ENCODE measurements at regions of chr6 and their contacts with region 1.

Region 1: GRCh38 chr6:26596579-26597388 is at the start of gene ABT1:
- DNase-seq: peak; percentile 99
- H3K4me3 ChIP-seq: peak within 1 kb of the TSS; percentile 30 to 87 (median 69)
- H3K27ac ChIP-seq: peak within 1 kb of the TSS; percentile 80
- H3K4me1 ChIP-seq: peaks cover 18% of the 10 kb centered on the region
- H3K27me3 ChIP-seq: peaks cover 8 to 11% of the 10 kb centered on the region in 2 experiments
- CTCF ChIP-seq: no peak
- POLR2A ChIP-seq: peak; percentile 80
- total RNA-seq, gene ABT1: 18.5 and 20.1 TPM in 2 replicates

Region 2: DNA sequence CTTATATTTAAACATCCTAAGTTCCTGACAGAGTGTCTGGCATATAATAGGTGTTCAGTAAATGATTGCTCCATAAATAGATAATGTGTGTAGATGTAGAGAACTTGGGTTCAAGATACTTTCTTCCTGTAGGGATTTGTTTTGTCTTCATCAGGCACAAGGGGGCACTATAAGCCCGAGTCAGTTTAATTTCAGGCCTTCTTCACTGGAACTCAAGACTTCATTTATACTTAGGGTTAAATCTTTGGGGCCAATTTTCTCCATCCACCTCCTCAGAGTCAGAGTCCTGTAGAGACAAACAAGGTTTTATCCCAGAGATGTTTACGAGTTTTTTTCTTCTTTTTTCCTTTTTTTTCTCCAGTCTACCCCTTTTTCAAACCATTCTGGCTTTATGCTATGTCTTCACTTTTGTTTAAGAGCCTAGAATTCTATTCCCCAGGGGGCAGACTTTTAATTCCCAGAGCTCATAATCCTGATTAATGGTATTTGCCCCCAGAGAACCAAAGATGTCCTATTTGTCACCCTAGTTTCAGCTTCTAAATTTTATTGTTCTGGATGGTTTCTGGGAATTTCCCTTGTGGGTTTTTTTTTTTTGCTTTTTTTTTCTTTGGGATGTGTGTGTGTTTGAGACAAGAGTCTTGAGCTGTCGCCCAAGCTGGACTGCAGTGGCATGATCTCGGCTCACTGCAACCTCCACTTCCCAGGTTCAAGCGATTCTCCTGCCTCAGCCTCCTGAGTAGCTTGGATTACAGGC is 421.2 kb before region 1 on chr6:
- CTCF ChIA-PET with region 1: interaction called, 16 read pairs
- POLR2A ChIA-PET with region 1: no interaction called
- dilution Hi-C with region 1: no loop called
- intact Hi-C with region 1: loop called (anchors 2 kb)
- DNase-seq: peak; percentile 85
- H3K4me3 ChIP-seq: no peak overlapping the region
- H3K27ac ChIP-seq: no peak overlapping the region
- H3K4me1 ChIP-seq: peaks cover 11% of the 10 kb centered on the region
- H3K27me3 ChIP-seq: no peaks in the 10 kb centered on the region
- CTCF ChIP-seq: peak; percentile 46 to 51
- POLR2A ChIP-seq: no peak

Region 3: DNA sequence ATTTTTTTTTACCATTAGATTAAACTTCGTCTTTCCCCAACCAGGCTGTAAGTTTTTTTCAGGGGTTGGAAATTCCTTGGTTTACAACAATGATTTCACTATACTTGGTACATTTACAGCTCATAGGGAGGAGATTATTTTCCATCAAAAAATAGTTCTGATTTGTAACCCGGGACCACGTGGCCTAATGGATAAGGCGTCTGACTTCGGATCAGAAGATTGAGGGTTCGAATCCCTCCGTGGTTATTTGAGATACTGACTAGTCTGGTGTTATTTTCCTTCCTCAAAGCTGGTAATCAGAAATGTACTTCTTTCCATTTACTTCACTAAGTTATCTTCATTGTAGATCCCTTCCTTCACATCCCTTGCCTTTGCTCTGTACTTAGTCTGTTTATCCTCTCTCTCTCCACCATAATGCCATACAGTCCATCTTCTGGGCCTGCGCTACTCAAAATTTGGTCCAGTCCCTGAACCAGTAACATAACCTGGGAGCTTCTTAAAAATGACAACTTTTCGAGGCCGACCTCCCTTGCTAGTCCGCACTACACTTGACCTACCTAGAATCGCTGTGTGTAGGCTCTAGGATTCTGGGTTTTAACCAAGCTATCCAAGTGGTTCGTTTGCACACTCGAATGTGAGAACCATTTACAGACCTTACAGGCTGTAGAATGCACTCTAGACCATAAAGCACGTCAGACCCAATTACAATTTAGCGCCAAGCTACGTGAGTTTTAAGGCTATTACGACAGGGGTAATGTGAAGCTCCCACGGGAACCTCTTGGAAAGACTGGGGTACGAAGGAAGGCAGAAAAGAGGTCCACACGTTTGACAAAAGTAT is 273.9 kb before region 1 on chr6:
- CTCF ChIA-PET with region 1: interaction called, 13 read pairs
- POLR2A ChIA-PET with region 1: no interaction called
- dilution Hi-C with region 1: no loop called
- intact Hi-C with region 1: loop called (anchors 1 kb)
- DNase-seq: peak; percentile 90
- H3K4me3 ChIP-seq: peak overlapping the region; percentile 50 to 85 (median 85)
- H3K27ac ChIP-seq: peak overlapping the region; percentile 44
- H3K4me1 ChIP-seq: peaks cover 6% of the 10 kb centered on the region
- H3K27me3 ChIP-seq: no peaks in the 10 kb centered on the region
- CTCF ChIP-seq: no peak
- POLR2A ChIP-seq: no peak

Region 4: DNA sequence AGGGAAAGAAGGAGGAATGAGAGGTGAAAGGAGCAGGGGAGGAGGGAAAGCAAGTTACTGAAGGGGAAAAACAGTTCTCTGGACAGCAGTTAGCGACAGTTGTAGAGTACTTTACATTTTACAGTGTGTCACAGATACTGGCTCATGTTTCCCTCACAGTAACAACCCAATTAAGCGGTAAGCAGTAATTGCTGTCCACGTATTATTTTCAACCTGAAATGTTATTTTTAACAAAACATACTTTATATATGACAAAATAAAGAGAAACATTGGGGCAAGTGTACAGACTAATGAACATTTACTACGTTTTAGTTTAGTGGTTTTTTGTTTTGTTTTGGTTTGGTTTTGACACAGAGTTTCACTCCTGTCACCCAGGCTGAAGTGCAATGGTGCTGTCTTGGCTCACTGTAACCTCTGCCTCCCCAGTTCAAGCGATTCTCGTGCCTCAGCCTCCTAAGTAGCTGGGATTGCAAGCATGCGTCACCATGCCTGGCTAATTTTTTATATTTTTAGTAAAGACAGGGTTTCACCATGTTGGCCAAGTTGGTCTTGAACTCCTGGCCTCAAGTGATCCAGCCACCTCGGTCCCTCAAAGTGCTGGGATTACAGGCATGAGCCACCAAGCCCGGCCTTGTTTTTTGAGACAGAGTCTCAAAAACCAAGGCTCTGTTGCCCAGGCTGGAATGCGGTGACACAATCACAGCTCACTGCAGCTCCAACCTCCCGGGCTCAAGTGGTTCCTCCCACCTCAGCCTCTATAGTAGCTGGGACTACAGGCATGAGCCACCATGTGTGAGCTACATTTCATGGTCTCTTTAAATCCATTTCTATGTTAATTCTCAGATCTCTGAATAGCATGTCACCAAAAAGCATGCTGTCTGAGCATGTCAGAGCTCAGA is 254.4 kb before region 1 on chr6:
- CTCF ChIA-PET with region 1: interaction called, 159 read pairs
- POLR2A ChIA-PET with region 1: interaction called, 4 read pairs
- dilution Hi-C with region 1: no loop called
- intact Hi-C with region 1: loop called (anchors 1 kb)
- DNase-seq: no peak
- H3K4me3 ChIP-seq: no peak overlapping the region
- H3K27ac ChIP-seq: no peak overlapping the region
- H3K4me1 ChIP-seq: peaks cover 2% of the 10 kb centered on the region
- H3K27me3 ChIP-seq: peaks cover 0 to 3% of the 10 kb centered on the region in 2 experiments
- CTCF ChIP-seq: no peak
- POLR2A ChIP-seq: no peak

Region 5: GRCh38 chr6:26563488-26563887 is 33.3 kb before region 1 on chr6:
- CTCF ChIA-PET with region 1: interaction called, 359 read pairs
- POLR2A ChIA-PET with region 1: no interaction called
- dilution Hi-C with region 1: no loop called
- intact Hi-C with region 1: no loop called
- DNase-seq: no peak
- H3K4me3 ChIP-seq: no peak overlapping the region
- H3K27ac ChIP-seq: no peak overlapping the region
- H3K4me1 ChIP-seq: no peaks in the 10 kb centered on the region
- H3K27me3 ChIP-seq: peaks cover 4 to 13% of the 10 kb centered on the region in 2 experiments
- CTCF ChIP-seq: no peak
- POLR2A ChIP-seq: no peak

Region 6: DNA sequence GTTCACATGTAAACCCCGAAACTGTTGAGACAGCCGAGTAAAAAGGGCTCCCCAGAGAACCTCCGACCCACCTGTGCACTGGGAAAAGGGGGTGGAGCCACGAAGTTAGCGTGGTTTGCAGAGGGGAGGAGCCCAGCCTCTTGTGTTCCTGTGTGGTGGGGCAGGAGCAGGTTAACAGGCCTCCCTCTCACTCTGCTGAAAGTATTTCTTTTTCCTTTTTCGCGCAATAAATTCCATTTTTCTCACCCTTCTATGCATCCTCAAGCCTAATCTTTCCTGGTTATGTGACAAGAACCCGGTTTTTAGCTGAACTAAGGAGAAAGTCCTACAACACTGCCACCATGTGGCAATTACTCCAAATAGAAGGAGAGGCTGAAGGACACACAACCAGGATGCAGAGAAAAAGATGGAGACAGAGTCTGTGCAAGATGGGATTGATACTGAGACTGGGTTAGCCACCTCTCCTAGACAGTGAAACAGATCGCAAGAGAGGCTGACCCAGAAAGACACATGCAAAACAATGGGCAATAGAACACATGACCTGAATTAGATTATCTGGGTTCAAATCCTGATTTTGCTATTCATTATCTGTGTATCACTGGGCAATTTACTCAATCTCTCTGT is 482.1 kb after region 1 on chr6:
- CTCF ChIA-PET with region 1: interaction called, 20 read pairs
- POLR2A ChIA-PET with region 1: no interaction called
- dilution Hi-C with region 1: no loop called
- intact Hi-C with region 1: no loop called
- DNase-seq: peak; percentile 71
- H3K4me3 ChIP-seq: no peak overlapping the region
- H3K27ac ChIP-seq: no peak overlapping the region
- H3K4me1 ChIP-seq: peaks cover 2% of the 10 kb centered on the region
- H3K27me3 ChIP-seq: peaks cover 6 to 16% of the 10 kb centered on the region in 2 experiments
- CTCF ChIP-seq: peak; percentile 48 to 49
- POLR2A ChIP-seq: no peak

Region 7: GRCh38 chr6:27743818-27744217 is 1147.0 kb after region 1 on chr6:
- CTCF ChIA-PET with region 1: no interaction called
- POLR2A ChIA-PET with region 1: no interaction called
- dilution Hi-C with region 1: no loop called
- intact Hi-C with region 1: loop called (anchors 1 kb)
- DNase-seq: no peak
- H3K4me3 ChIP-seq: no peak overlapping the region
- H3K27ac ChIP-seq: no peak overlapping the region
- H3K4me1 ChIP-seq: no peaks in the 10 kb centered on the region
- H3K27me3 ChIP-seq: peaks cover 13 to 25% of the 10 kb centered on the region in 2 experiments
- CTCF ChIP-seq: no peak
- POLR2A ChIP-seq: no peak